PC-3 (cell line): ENCODE measurements at regions of chr7 and their contacts with region 1.

Region 1: GRCh38 chr7:28037220-28038010 is 143.2 kb downstream of the JAZF1 start:
- DNase-seq: peak; percentile 96
- ATAC-seq: peak; percentile 76
- H3K4me3 ChIP-seq: peak overlapping the region; percentile 57
- H3K27ac ChIP-seq: peak overlapping the region; percentile 90
- H3K4me1 ChIP-seq: peaks cover 70% of the 10 kb centered on the region
- H3K27me3 ChIP-seq: no peaks in the 10 kb centered on the region
- CTCF ChIP-seq: no peak

Region 2: GRCh38 chr7:28062197-28062991 is 25.0 kb after region 1 on chr7:
- CTCF ChIA-PET with region 1: interaction called, 5 read pairs
- POLR2A ChIA-PET with region 1: no interaction called
- intact Hi-C with region 1: loop called (anchors 1 kb)
- DNase-seq: peak; percentile 73
- ATAC-seq: peak; percentile 89
- H3K4me3 ChIP-seq: peak overlapping the region; percentile 9; the same call in 1 of the 2 replicates
- H3K27ac ChIP-seq: peak overlapping the region; percentile 63
- H3K4me1 ChIP-seq: peaks cover 29% of the 10 kb centered on the region
- H3K27me3 ChIP-seq: no peaks in the 10 kb centered on the region
- CTCF ChIP-seq: peak; percentile 85